ENCODE measurements at regions of chr14 and their contacts with region 1.

Region 1: DNA sequence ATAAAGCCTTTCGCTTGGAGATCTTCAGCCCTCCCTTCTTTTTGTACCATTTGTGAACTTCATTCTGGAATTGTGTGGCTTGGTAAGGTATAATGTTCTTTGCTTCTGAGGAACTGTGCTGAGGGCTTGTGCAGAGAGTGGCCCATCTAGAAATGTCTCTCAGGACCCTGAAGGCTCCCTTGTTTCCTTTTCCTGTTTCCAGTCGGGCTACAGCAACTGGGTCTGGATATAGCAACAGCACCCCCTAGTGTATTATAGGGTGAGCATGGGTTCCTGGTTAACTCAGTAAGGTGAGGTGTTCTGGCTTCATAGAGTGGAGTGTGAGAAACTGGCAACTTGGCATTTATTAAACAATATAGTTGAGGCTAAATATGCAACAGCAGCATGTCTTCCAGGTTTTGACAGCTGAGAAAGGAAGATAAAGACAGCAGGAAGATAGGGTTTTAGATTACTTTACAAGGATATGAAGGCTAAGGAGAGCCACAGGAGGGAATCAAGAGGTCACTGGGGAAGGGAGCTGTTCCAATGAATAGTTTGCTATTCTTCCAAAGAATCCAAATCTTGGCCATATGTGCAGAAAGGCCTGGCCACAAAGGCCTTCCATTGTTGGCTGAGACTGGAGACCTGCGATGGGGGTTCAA is 49.1 kb upstream of the RNU6-8 start:
- DNase-seq: peak; percentile 77
- ATAC-seq: peak; percentile 90
- H3K4me3 ChIP-seq: no peak overlapping the region
- H3K4me3 Mint-ChIP-seq: no peak overlapping the region
- H3K27ac ChIP-seq: no peak overlapping the region
- H3K27ac Mint-ChIP-seq: no peak overlapping the region
- H3K4me1 ChIP-seq: peaks cover 0 to 5% of the 10 kb centered on the region in 2 donors
- H3K4me1 Mint-ChIP-seq: no peaks in the 10 kb centered on the region
- H3K27me3 ChIP-seq: no peaks in the 10 kb centered on the region
- H3K27me3 Mint-ChIP-seq: no peaks in the 10 kb centered on the region
- CTCF ChIP-seq: peak; percentile 87

Region 2: DNA sequence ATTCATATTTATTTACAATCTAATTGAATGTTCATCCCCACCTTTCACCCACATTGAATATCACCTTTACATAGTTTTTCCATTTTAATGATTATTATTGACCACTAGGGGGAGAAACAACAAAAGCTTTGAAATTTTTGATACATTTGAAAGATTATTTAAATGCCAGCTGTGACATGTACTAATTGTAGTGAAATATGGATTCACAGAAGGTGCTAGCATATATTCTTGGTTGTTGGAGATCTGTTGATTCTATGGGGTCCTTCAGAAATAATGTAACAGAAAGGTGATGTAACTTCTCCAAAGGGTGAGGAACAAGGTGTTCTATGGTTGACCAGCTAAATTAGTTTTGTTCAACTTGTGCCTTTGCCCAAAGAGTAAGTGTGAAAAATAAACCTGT is 741.9 kb before region 1 on chr14:
- CTCF ChIA-PET with region 1: interaction called, 58 read pairs
- POLR2A ChIA-PET with region 1: no interaction called
- intact Hi-C with region 1: loop called (anchors 1 kb)
- DNase-seq: peak; percentile 52
- ATAC-seq: no peak
- H3K4me3 ChIP-seq: no peak overlapping the region
- H3K4me3 Mint-ChIP-seq: no peak overlapping the region
- H3K27ac ChIP-seq: no peak overlapping the region
- H3K27ac Mint-ChIP-seq: no peak overlapping the region
- H3K4me1 ChIP-seq: no peaks in the 10 kb centered on the region
- H3K4me1 Mint-ChIP-seq: no peaks in the 10 kb centered on the region
- H3K27me3 ChIP-seq: no peaks in the 10 kb centered on the region
- H3K27me3 Mint-ChIP-seq: no peaks in the 10 kb centered on the region
- CTCF ChIP-seq: peak; percentile 82

Region 3: DNA sequence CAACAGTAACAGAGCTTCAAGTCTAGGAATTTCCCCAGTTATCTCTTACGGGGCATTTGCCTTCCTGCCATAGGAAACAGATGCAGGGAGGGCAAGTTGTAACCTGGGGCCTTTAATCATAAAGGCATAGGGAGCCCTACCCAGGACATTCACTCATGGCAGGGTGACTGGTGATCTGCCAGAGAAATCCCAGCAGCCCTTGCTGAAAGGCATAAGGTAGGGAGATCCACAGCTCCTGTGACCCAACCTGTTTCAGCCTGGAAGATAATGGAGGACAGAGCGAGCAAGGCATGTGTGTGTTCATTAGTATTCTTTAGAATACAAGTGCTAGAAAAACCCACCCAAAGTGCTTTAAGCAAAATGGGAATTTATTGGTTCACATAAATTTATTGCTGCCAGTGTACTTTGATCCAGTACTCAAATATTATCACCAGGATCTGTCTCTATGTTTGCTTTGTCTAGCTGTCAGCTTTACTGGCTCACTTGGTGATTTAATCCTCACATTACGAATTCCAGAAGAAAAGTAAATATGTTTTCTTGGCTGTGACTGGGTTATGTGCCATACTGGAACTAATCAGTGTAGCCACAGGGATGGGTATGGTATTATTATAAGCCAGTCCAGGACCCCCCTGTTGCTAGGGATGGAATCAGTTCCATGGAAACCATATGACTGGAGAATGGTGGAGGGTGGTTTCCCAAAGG is 55.9 kb after region 1 on chr14:
- CTCF ChIA-PET with region 1: no interaction called
- POLR2A ChIA-PET with region 1: no interaction called
- intact Hi-C with region 1: no loop called
- DNase-seq: no peak
- ATAC-seq: no peak
- H3K4me3 ChIP-seq: no peak overlapping the region
- H3K4me3 Mint-ChIP-seq: no peak overlapping the region
- H3K27ac ChIP-seq: no peak overlapping the region
- H3K27ac Mint-ChIP-seq: no peak overlapping the region
- H3K4me1 ChIP-seq: no peaks in the 10 kb centered on the region
- H3K4me1 Mint-ChIP-seq: no peaks in the 10 kb centered on the region
- H3K27me3 ChIP-seq: no peaks in the 10 kb centered on the region
- H3K27me3 Mint-ChIP-seq: peaks cover 5% of the 10 kb centered on the region
- CTCF ChIP-seq: no peak

Region 4: DNA sequence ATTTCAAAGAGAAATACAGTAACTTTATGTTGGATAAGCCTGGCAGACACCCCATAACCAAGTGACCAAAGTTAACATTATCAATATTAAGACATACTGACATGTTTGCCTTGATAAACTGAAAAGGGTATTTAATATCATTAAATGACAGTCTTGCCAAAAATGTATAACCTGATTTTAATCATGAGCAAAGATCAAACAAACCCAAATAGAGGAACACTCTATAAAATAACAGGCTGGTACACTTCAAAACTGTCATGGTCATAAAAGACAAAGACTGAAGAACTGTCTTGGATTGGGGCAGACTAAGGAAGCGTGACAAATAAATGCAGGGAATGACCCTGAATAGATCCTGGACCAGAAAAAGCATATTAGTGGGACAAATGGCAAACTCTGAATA is 141.0 kb after region 1 on chr14:
- CTCF ChIA-PET with region 1: no interaction called
- POLR2A ChIA-PET with region 1: no interaction called
- intact Hi-C with region 1: no loop called
- DNase-seq: no peak
- ATAC-seq: no peak
- H3K4me3 ChIP-seq: no peak overlapping the region
- H3K4me3 Mint-ChIP-seq: no peak overlapping the region
- H3K27ac ChIP-seq: no peak overlapping the region
- H3K27ac Mint-ChIP-seq: no peak overlapping the region
- H3K4me1 ChIP-seq: no peaks in the 10 kb centered on the region
- H3K4me1 Mint-ChIP-seq: no peaks in the 10 kb centered on the region
- H3K27me3 ChIP-seq: peaks cover 0 to 3% (median 0%) of the 10 kb centered on the region in 4 experiments
- H3K27me3 Mint-ChIP-seq: peaks cover 5% of the 10 kb centered on the region
- CTCF ChIP-seq: no peak

Measured in B cell (primary cell).